ENCODE measurements at regions of chr1 and their contacts with region 1.

Region 1: DNA sequence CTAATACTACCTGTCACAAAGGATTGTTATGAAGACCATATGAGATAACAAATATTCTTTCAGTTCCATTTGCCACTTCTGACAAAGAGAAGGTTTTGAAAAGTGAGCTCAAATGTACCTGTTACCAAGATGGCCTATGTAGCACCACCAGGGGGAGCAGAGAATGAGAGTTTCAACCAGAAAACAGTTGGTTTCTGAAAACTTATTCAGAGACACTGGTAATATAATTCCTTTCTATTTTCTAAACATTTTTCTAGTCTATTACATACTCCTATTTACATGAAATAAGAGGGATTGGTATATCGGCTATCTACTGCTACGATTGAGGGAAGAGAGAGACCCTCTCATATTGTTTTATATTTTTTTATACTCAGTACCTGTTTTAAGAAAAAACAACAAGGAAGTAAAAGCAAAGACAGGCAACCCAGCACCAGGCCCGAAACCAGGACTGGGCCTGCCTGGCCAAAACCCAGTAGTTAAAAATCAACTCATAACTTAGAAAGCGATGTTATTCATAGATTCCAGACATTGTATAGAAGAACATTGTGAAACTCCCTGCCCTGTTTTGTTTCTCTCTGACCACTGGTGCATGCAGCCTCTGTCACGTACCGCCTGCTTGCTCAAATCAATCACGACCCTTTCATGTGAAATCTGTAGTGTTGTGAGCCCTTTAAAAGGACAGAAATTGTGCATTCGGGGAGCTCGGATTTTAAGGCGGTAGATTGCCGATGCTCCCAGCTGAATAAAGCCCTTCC is 48.3 kb downstream of the IL23R start:
- DNase-seq: peak; percentile 78
- ATAC-seq: peak; percentile 27
- H3K4me3 Mint-ChIP-seq: no peak overlapping the region
- H3K27ac Mint-ChIP-seq: no peak overlapping the region
- H3K4me1 Mint-ChIP-seq: peaks cover 44% of the 10 kb centered on the region
- H3K27me3 Mint-ChIP-seq: no peaks in the 10 kb centered on the region

Region 2: GRCh38 chr1:66809736-66810326 is 404.8 kb before region 1 on chr1:
- CTCF ChIA-PET with region 1: no interaction called
- POLR2A ChIA-PET with region 1: no interaction called
- DNase-seq: no peak
- ATAC-seq: no peak
- H3K4me3 Mint-ChIP-seq: no peak overlapping the region
- H3K27ac Mint-ChIP-seq: no peak overlapping the region
- H3K4me1 Mint-ChIP-seq: no peaks in the 10 kb centered on the region
- H3K27me3 Mint-ChIP-seq: no peaks in the 10 kb centered on the region

Region 3: GRCh38 chr1:67134695-67135094 is 79.9 kb before region 1 on chr1 and contains the start of gene C1orf141:
- CTCF ChIA-PET with region 1: interaction called, 13 read pairs
- POLR2A ChIA-PET with region 1: interaction called, 4 read pairs
- DNase-seq: peak; percentile 35
- ATAC-seq: peak; percentile 77
- H3K4me3 Mint-ChIP-seq: peak within 1 kb of the TSS; percentile 63
- H3K27ac Mint-ChIP-seq: no peak within 1 kb of the TSS
- H3K4me1 Mint-ChIP-seq: peaks cover 13% of the 10 kb centered on the region
- H3K27me3 Mint-ChIP-seq: no peaks in the 10 kb centered on the region
- total RNA-seq, gene C1orf141: not detected

Region 4: GRCh38 chr1:67162957-67163356 is 51.6 kb before region 1 on chr1:
- CTCF ChIA-PET with region 1: interaction called, 313 read pairs
- POLR2A ChIA-PET with region 1: interaction called, 4 read pairs
- DNase-seq: peak; percentile 54
- ATAC-seq: peak; percentile 90
- H3K4me3 Mint-ChIP-seq: no peak overlapping the region
- H3K27ac Mint-ChIP-seq: peak overlapping the region; percentile 72
- H3K4me1 Mint-ChIP-seq: peaks cover 25% of the 10 kb centered on the region
- H3K27me3 Mint-ChIP-seq: peaks cover 7% of the 10 kb centered on the region

Region 5: GRCh38 chr1:67227196-67227595 is 12.6 kb after region 1 on chr1:
- CTCF ChIA-PET with region 1: interaction called, 36 read pairs
- POLR2A ChIA-PET with region 1: no interaction called
- DNase-seq: no peak
- ATAC-seq: no peak
- H3K4me3 Mint-ChIP-seq: no peak overlapping the region
- H3K27ac Mint-ChIP-seq: no peak overlapping the region
- H3K4me1 Mint-ChIP-seq: peaks cover 5% of the 10 kb centered on the region
- H3K27me3 Mint-ChIP-seq: peaks cover 7% of the 10 kb centered on the region

Region 6: DNA sequence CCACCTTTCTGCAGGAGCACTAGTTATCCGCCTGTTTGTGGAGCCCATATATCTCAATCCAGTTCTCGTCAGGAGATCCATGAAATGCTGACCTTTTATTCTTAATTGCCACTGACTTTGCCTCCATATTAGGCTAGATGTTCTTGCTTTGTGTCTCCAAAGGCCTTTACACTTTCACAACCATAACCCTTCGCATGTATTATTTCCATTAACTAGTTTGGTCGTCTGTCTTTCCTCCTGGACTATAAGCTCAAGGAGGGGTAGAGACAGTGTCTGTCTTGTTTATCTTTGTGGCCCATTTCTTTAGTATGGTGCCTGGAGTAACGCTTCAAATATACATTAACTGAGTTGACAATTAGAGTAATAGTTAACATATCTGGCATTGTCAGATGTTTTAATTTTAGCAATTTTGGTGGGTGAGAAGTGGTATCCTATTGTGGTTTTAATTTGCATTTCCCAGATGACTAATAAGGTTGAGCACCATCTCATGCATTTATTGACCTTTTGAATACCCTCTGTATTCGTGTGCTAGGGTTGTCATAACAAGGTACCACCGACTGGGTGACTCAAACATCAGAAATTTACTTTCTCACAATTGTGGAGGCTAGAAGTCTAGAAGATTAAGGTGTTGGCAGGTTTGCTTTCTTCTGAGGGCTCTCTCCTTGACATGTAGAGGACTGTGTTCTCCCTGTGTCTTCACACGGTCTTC is 71.3 kb after region 1 on chr1:
- CTCF ChIA-PET with region 1: interaction called, 12 read pairs
- POLR2A ChIA-PET with region 1: no interaction called
- DNase-seq: no peak
- ATAC-seq: peak; percentile 81
- H3K4me3 Mint-ChIP-seq: no peak overlapping the region
- H3K27ac Mint-ChIP-seq: no peak overlapping the region
- H3K4me1 Mint-ChIP-seq: peaks cover 22% of the 10 kb centered on the region
- H3K27me3 Mint-ChIP-seq: no peaks in the 10 kb centered on the region

Region 7: DNA sequence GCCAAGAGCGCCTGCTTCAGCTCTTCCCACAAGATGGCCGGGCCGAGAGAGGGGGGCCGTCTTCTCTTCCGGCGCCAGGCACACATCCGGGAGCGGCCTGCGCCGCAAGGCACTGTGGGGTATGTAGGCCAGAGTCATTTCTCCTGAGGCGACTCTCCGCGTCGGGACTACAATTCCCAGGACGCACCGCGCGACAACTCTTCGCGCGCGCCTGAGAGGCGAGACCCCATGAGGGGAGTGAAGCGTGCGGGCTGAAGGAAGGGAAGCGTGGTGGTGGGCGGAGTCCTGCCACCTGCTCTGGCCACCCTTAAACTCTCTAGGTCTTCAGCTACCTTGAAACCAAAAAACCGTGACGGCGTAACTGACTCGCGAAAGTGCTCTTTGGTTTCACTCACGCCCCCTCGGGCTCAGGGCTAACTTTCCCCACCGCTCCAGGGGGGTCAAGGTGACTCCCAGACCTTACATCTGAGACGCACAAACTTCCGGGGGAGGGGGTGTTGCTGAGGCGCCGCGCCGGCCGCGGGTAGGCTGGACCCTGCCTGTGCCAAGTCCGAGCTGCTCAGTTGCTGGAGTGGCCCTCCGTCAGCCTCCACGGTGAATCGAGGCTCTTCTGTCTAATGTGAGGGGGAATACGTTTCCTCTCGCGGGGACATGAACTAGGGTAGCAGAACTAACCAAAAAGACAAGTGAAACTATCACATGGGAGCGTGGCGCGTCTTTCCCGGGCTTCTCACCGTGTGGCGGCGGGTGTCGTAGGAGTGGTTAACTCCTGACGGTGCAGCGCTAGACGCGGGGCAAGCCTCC is 216.0 kb after region 1 on chr1 and contains the start of gene SERBP1:
- CTCF ChIA-PET with region 1: interaction called, 52 read pairs
- POLR2A ChIA-PET with region 1: interaction called, 3 read pairs
- DNase-seq: peak; percentile 97
- ATAC-seq: peak; percentile 82
- H3K4me3 Mint-ChIP-seq: peak within 1 kb of the TSS; percentile 78
- H3K27ac Mint-ChIP-seq: peak within 1 kb of the TSS; percentile 91
- H3K4me1 Mint-ChIP-seq: peaks cover 46% of the 10 kb centered on the region
- H3K27me3 Mint-ChIP-seq: no peaks in the 10 kb centered on the region
- total RNA-seq, gene SERBP1: 280 to 297 TPM

Region 8: DNA sequence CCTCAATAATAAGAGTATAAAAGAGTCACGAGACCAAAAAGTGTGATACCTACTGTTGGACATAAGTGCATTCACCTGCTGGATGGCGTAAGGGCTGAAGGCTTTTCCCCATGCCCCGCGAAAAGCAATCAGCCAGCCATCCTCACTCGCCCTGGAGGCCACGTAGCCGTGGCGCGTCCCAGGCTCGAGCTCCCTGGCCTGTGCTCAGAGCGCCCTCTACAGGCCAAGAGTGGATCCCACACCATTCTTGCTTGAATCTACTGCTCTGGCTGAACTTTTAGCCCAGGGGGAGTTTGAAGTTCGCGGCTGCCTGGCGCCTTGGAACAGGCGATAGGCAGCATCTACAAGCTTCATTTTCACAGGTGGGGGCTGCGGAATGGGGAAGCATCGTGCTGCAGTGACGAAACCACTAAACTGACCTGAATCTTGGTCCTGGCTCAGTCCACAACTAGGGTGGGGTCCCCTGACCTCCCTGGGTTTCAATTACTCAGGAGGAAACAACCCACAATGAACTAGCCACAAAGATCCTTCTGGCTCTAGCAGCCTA is 285.9 kb after region 1 on chr1:
- CTCF ChIA-PET with region 1: interaction called, 138 read pairs
- POLR2A ChIA-PET with region 1: interaction called, 6 read pairs
- DNase-seq: peak; percentile 92
- ATAC-seq: peak; percentile 100
- H3K4me3 Mint-ChIP-seq: peak overlapping the region; percentile 18
- H3K27ac Mint-ChIP-seq: no peak overlapping the region
- H3K4me1 Mint-ChIP-seq: peaks cover 4% of the 10 kb centered on the region
- H3K27me3 Mint-ChIP-seq: peaks cover 9% of the 10 kb centered on the region